ENCODE measurements at regions of chr6 and their contacts with region 1.

Region 1: GRCh38 chr6:138509371-138509770 is 10.1 kb upstream of the NHSL1 start:
- DNase-seq: no peak
- H3K4me3 ChIP-seq: no peak overlapping the region
- H3K27me3 ChIP-seq: no peaks in the 10 kb centered on the region
- CTCF ChIP-seq: peak; percentile 47

Region 2: DNA sequence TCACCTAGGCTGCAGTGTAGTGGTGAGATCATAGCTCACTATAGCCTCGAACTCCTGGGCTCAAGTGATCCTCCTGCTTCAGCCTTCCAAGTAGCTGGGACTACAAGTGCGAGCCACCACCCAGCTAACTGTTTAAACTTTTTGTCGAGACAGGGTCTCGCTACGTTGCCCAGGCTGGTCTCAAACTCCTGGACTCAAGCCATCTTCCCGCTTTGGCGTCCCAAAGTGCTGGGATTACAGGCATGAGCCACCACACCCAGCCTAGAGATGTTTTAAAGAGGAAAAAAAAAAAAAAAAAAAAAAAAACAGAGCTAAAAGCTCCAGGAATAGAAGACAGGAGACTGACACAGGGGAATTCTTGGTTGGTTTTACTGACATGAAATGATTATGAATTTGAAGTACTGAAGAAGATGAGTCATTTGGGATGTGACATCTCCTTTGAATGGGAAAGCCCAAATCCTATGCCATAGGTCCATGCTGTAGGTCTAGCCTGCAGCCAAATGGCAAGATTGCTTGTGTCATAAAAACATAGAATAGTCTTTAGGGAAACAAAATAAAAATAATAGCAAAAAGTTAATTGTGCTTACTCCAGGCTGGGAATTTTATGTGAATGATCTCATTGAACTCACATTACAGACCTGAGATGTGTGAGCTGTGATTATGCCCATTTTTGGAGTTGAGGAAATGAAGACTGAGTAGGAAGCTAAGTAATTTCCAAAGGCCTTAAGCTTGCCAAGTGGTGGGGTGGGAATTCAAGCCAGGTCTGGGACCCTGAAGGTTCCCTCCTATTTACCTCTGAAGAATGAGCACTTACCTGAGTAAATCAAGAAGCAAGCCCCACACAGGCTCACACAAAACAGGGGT is 14.2 kb after region 1 on chr6:
- CTCF ChIA-PET with region 1: interaction called, 43 read pairs
- POLR2A ChIA-PET with region 1: no interaction called
- DNase-seq: no peak
- H3K4me3 ChIP-seq: no peak overlapping the region
- H3K27me3 ChIP-seq: no peaks in the 10 kb centered on the region
- CTCF ChIP-seq: no peak